Caco-2 (cell line): ENCODE measurements at regions of chr19 and their contacts with region 1.

Region 1: GRCh38 chr19:2385053-2385721 is 25.1 kb downstream of the TMPRSS9 start:
- DNase-seq: peak; percentile 67 to 88
- H3K4me3 ChIP-seq: no peak overlapping the region
- H3K4me3 Mint-ChIP-seq: no peak overlapping the region
- H3K27ac Mint-ChIP-seq: peak overlapping the region; percentile 73
- H3K4me1 ChIP-seq: peaks cover 5% of the 10 kb centered on the region; the same call in 1 of the 2 replicates
- H3K4me1 Mint-ChIP-seq: peaks cover 5% of the 10 kb centered on the region
- H3K27me3 ChIP-seq: no peaks in the 10 kb centered on the region
- H3K27me3 Mint-ChIP-seq: no peaks in the 10 kb centered on the region
- CTCF ChIP-seq: no peak

Region 2: GRCh38 chr19:2274931-2275535 is 110.2 kb before region 1 on chr19:
- CTCF ChIA-PET with region 1: no interaction called
- POLR2A ChIA-PET with region 1: interaction called, 3 read pairs
- intact Hi-C with region 1: loop called (anchors 5 kb)
- DNase-seq: peak; percentile 79 to 83
- H3K4me3 ChIP-seq: no peak overlapping the region
- H3K4me3 Mint-ChIP-seq: no peak overlapping the region
- H3K27ac Mint-ChIP-seq: peak overlapping the region; percentile 85
- H3K4me1 ChIP-seq: peaks cover 14% of the 10 kb centered on the region
- H3K4me1 Mint-ChIP-seq: no peaks in the 10 kb centered on the region
- H3K27me3 ChIP-seq: no peaks in the 10 kb centered on the region
- H3K27me3 Mint-ChIP-seq: no peaks in the 10 kb centered on the region
- CTCF ChIP-seq: peak; percentile 61 to 73

Region 3: DNA sequence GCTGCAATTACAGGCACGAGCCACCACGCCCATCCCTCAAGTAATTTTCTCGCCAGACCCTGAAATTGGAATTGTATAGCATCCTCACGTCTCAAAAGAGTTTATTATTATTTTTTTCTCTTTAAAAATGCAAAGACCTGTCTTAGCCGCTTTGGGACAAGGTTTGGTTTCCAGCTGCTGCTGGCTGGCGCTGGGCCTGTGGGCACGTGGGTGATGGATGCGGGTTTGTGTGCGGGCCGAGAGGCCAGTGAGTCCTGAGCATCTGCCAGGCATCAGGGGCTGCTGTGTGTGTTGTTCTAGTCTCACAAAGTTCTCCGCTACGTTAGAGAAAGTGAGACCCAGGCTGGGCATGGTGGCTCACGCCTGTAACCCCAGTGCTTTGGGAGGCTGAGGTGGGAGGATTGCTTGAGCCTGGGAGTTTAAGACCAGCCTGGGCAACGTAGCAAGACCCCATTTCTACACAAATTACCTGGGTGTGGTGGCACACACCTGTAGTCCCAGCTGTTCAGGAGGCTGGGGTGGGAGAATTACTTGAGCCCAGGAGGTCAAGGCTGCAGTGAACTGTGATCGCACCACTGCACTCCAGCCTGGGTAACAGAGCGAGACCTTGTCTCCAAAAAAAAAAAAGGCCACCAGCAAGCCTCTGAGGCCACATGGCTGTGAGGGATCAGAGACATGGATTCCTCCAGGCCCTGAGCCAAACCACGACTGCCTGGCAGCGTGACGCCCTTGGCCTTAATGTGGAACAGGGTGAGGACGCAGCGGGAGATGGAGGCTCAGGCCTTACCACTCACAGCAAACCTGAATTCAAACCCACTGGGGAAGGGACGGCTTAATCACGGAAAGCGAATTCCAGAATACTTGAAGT is 29.8 kb before region 1 on chr19:
- CTCF ChIA-PET with region 1: no interaction called
- POLR2A ChIA-PET with region 1: no interaction called
- intact Hi-C with region 1: no loop called
- DNase-seq: no peak
- H3K4me3 ChIP-seq: no peak overlapping the region
- H3K4me3 Mint-ChIP-seq: no peak overlapping the region
- H3K27ac Mint-ChIP-seq: no peak overlapping the region
- H3K4me1 ChIP-seq: no peaks in the 10 kb centered on the region
- H3K4me1 Mint-ChIP-seq: no peaks in the 10 kb centered on the region
- H3K27me3 ChIP-seq: no peaks in the 10 kb centered on the region
- H3K27me3 Mint-ChIP-seq: no peaks in the 10 kb centered on the region
- CTCF ChIP-seq: no peak